ENCODE measurements at regions of chr4 and their contacts with region 1.

Region 1: DNA sequence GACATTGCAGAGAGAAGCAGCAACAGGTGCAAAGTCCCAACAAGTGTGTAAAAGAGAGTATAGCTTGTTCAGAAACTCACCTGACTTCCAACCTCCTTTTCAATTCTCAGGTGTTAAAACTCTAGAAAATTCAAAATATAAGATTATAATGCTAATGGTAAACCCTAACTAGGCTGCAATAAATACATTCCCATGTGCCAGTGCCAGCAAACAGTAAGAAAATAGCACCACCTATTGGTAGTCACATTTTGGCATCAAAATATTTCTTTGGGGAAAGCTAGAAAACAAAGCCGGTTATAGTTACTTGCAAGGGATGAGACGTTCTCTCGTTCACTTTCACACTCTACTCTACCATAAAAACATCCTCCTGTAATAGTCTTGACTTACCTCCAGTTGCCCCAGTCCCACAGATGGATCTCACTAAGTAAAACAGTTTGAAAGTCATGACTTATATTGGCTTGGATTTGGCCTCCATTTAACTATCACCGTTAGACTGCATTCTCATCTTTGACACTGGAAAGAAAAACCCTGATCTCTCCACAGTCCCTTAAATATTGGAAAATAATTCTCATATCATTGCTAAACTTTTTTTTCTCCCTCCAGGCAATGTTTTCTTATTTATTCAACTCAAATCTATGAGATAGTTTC is 9.6 kb downstream of the BMP3 start:
- DNase-seq: no peak
- ATAC-seq: peak; percentile 82
- H3K4me3 ChIP-seq: no peak overlapping the region
- H3K27ac ChIP-seq: no peak overlapping the region
- H3K4me1 ChIP-seq: 0 out of 2 replicates have a peak, but pooled peaks cover 3% of the 10 kb centered on the region
- H3K27me3 ChIP-seq: no peaks in the 10 kb centered on the region
- CTCF ChIP-seq: peak; percentile 59 to 81 (median 68); a peak in 5 of 6 replicates
- EP300 ChIP-seq: no peak
- POLR2A ChIP-seq: no peak
- RAD21 ChIP-seq: peak; percentile 92

Region 2: GRCh38 chr4:80592950-80593349 is 447.2 kb before region 1 on chr4:
- CTCF ChIA-PET with region 1: interaction called, 28 read pairs
- POLR2A ChIA-PET with region 1: no interaction called
- RAD21 ChIA-PET with region 1: interaction called, 3 read pairs
- SMC1A ChIA-PET with region 1: interaction called, 12 read pairs
- in situ Hi-C with region 1: no loop called
- intact Hi-C with region 1: no loop called
- DNase-seq: no peak
- ATAC-seq: peak; percentile 76
- H3K4me3 ChIP-seq: no peak overlapping the region
- H3K27ac ChIP-seq: no peak overlapping the region
- H3K4me1 ChIP-seq: no peaks in the 10 kb centered on the region
- H3K27me3 ChIP-seq: no peaks in the 10 kb centered on the region
- CTCF ChIP-seq: peak; percentile 23 to 34 (median 25); a peak in 3 of 6 replicates
- EP300 ChIP-seq: no peak
- POLR2A ChIP-seq: no peak
- RAD21 ChIP-seq: peak; percentile 43

Region 3: GRCh38 chr4:80619070-80619674 is 421.0 kb before region 1 on chr4:
- CTCF ChIA-PET with region 1: interaction called, 20 read pairs
- POLR2A ChIA-PET with region 1: no interaction called
- RAD21 ChIA-PET with region 1: interaction called, 7 read pairs
- SMC1A ChIA-PET with region 1: interaction called, 10 read pairs
- in situ Hi-C with region 1: loop called (anchors 10 kb)
- intact Hi-C with region 1: loop called (anchors 2 kb)
- DNase-seq: no peak
- ATAC-seq: peak; percentile 48; the same call in 2 of the 3 replicates
- H3K4me3 ChIP-seq: no peak overlapping the region
- H3K27ac ChIP-seq: no peak overlapping the region
- H3K4me1 ChIP-seq: no peaks in the 10 kb centered on the region
- H3K27me3 ChIP-seq: no peaks in the 10 kb centered on the region
- CTCF ChIP-seq: peak in 2 of 3 experiments; percentile 14 to 42; a peak in 3 of 6 replicates
- EP300 ChIP-seq: no peak
- POLR2A ChIP-seq: no peak
- RAD21 ChIP-seq: peak; percentile 52

Region 4: DNA sequence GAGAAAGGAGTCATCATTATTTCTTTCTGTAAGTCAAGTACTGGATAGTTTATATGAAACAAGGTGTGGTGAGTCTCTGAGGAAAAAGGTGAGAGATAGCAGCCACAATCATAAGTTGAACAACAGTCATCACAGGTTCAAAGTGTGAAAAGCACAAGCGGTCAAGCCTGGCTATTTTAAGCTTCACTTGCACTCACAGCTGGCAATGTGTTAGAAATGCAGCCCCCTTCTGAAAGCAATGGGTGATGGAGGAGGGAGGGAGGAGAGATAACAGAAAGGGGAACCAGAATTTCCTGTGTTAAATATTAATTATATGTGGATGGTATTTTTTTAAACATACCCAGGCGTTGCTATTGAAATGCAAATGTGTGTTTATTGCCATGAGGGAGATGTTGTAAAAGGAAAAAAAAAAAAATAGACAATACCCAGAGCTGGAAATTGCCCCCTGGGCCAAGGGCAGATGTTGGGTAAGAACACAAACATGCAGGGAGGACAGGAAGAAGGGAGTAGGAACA is 36.5 kb before region 1 on chr4:
- CTCF ChIA-PET with region 1: interaction called, 17 read pairs
- POLR2A ChIA-PET with region 1: no interaction called
- RAD21 ChIA-PET with region 1: interaction called, 6 read pairs
- SMC1A ChIA-PET with region 1: interaction called, 4 read pairs
- in situ Hi-C with region 1: no loop called
- intact Hi-C with region 1: no loop called
- DNase-seq: peak; percentile 75
- ATAC-seq: peak; percentile 98
- H3K4me3 ChIP-seq: no peak overlapping the region
- H3K27ac ChIP-seq: no peak overlapping the region
- H3K4me1 ChIP-seq: peaks cover 6% of the 10 kb centered on the region; the same call in 1 of the 2 replicates
- H3K27me3 ChIP-seq: no peaks in the 10 kb centered on the region
- CTCF ChIP-seq: no peak
- EP300 ChIP-seq: peak; percentile 87 to 96
- POLR2A ChIP-seq: no peak
- RAD21 ChIP-seq: no peak

Region 5: GRCh38 chr4:81069706-81070331 is 29.7 kb after region 1 on chr4:
- CTCF ChIA-PET with region 1: interaction called, 16 read pairs
- POLR2A ChIA-PET with region 1: no interaction called
- RAD21 ChIA-PET with region 1: interaction called, 12 read pairs
- SMC1A ChIA-PET with region 1: interaction called, 6 read pairs
- in situ Hi-C with region 1: no loop called
- intact Hi-C with region 1: no loop called
- DNase-seq: peak; percentile 32
- ATAC-seq: peak; percentile 96
- H3K4me3 ChIP-seq: no peak overlapping the region
- H3K27ac ChIP-seq: no peak overlapping the region
- H3K4me1 ChIP-seq: no peaks in the 10 kb centered on the region
- H3K27me3 ChIP-seq: 0 out of 4 replicates have a peak, but pooled peaks cover 0 to 2% of the 10 kb centered on the region in 2 experiments
- CTCF ChIP-seq: peak; percentile 80 to 93 (median 93)
- EP300 ChIP-seq: no peak
- POLR2A ChIP-seq: no peak
- RAD21 ChIP-seq: peak; percentile 80

Region 6: DNA sequence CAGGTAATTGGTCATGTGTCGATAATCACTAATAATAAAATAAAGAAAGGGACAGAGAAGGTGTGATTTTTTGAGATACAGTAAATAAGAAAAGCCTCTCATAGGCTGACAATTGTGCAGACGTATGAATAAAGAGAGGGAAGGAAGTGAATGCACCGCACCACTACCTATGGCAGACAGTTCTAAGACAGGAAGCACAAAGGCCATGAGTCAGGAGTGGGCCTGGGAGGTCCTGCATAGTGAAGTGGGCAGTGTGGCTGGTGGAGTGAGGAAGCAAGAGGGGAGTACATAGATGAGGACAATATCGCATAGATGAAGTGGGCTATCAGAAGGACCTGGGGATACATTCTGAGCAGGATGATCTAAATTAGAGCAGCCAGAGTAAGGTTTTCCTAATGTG is 66.0 kb after region 1 on chr4:
- CTCF ChIA-PET with region 1: no interaction called
- POLR2A ChIA-PET with region 1: no interaction called
- RAD21 ChIA-PET with region 1: no interaction called
- SMC1A ChIA-PET with region 1: no interaction called
- in situ Hi-C with region 1: no loop called
- intact Hi-C with region 1: no loop called
- DNase-seq: no peak
- ATAC-seq: no peak
- H3K4me3 ChIP-seq: no peak overlapping the region
- H3K27ac ChIP-seq: no peak overlapping the region
- H3K4me1 ChIP-seq: no peaks in the 10 kb centered on the region
- H3K27me3 ChIP-seq: no peaks in the 10 kb centered on the region
- CTCF ChIP-seq: no peak
- EP300 ChIP-seq: no peak
- POLR2A ChIP-seq: no peak
- RAD21 ChIP-seq: no peak

Region 7: GRCh38 chr4:81343046-81343445 is 302.9 kb after region 1 on chr4:
- CTCF ChIA-PET with region 1: no interaction called
- POLR2A ChIA-PET with region 1: no interaction called
- RAD21 ChIA-PET with region 1: no interaction called
- SMC1A ChIA-PET with region 1: no interaction called
- in situ Hi-C with region 1: no loop called
- intact Hi-C with region 1: no loop called
- DNase-seq: no peak
- ATAC-seq: no peak
- H3K4me3 ChIP-seq: no peak overlapping the region
- H3K27ac ChIP-seq: no peak overlapping the region
- H3K4me1 ChIP-seq: no peaks in the 10 kb centered on the region
- H3K27me3 ChIP-seq: no peaks in the 10 kb centered on the region
- CTCF ChIP-seq: no peak
- EP300 ChIP-seq: no peak
- POLR2A ChIP-seq: no peak
- RAD21 ChIP-seq: no peak